ENCODE measurements at regions of chr6 and their contacts with region 1.

Region 1: GRCh38 chr6:137218917-137219663 is at the start of gene IFNGR1:
- DNase-seq: peak; percentile 97
- H3K4me3 Mint-ChIP-seq: peak within 1 kb of the TSS; percentile 93
- H3K27ac Mint-ChIP-seq: peak within 1 kb of the TSS; percentile 94
- H3K4me1 Mint-ChIP-seq: peaks cover 49% of the 10 kb centered on the region
- H3K27me3 Mint-ChIP-seq: no peaks in the 10 kb centered on the region
- total RNA-seq, gene IFNGR1: 25.5 to 26.4 TPM

Region 2: GRCh38 chr6:136289579-136290409 is 929.3 kb before region 1 on chr6 and contains the start of gene BCLAF1:
- CTCF ChIA-PET with region 1: no interaction called
- intact Hi-C with region 1: loop called (anchors 2 kb)
- DNase-seq: peak; percentile 99
- H3K4me3 Mint-ChIP-seq: peak within 1 kb of the TSS; percentile 97
- H3K27ac Mint-ChIP-seq: peak within 1 kb of the TSS; percentile 100
- H3K4me1 Mint-ChIP-seq: peaks cover 44% of the 10 kb centered on the region
- H3K27me3 Mint-ChIP-seq: no peaks in the 10 kb centered on the region
- total RNA-seq, gene BCLAF1: 108 to 117 TPM

Region 3: DNA sequence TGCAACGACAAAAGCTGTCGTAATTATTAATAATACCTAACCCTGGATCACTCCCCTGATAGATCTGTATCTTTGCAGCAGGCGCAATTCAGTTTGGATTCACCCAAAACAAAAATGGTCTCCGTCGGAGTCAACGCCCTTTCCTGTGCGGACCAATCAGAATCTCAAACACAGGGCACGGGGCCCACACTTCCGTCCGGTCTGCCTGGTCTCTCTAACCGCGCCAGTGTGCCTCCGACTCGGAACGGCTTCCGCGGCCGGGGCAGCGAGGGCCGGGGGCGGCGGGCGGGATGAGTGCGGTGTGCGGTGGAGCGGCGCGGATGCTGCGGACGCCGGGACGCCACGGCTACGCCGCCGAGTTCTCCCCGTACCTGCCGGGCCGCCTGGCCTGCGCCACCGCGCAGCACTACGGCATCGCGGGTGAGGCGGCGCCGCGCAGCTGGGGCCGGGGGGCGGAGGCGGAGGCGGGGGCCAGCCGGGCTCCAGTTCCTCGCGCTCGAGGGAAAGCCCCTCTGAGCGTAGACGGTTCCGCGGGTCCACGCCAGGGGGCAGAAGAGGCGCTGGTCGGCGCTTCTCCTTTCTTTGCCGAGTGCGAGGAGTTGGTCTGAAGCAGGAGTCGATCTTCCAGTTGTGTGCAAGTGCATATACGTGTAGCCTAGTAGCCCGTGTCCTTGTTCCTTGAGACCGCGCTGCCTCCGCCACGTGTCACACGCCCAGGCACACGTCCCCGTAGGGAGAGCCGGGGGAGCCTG is 396.5 kb before region 1 on chr6 and contains the start of gene PEX7:
- CTCF ChIA-PET with region 1: no interaction called
- intact Hi-C with region 1: loop called (anchors 2 kb)
- DNase-seq: peak; percentile 92
- H3K4me3 Mint-ChIP-seq: peak within 1 kb of the TSS; percentile 90
- H3K27ac Mint-ChIP-seq: peak within 1 kb of the TSS; percentile 92
- H3K4me1 Mint-ChIP-seq: peaks cover 19% of the 10 kb centered on the region
- H3K27me3 Mint-ChIP-seq: no peaks in the 10 kb centered on the region
- total RNA-seq, gene PEX7: 6.0 to 6.4 TPM

Region 4: GRCh38 chr6:137094411-137095008 is 124.6 kb before region 1 on chr6:
- CTCF ChIA-PET with region 1: no interaction called
- intact Hi-C with region 1: loop called (anchors 2 kb)
- DNase-seq: peak; percentile 75
- H3K4me3 Mint-ChIP-seq: no peak overlapping the region
- H3K27ac Mint-ChIP-seq: no peak overlapping the region
- H3K4me1 Mint-ChIP-seq: peaks cover 13% of the 10 kb centered on the region
- H3K27me3 Mint-ChIP-seq: peaks cover 3% of the 10 kb centered on the region

Region 5: GRCh38 chr6:137165375-137166246 is 53.5 kb before region 1 on chr6:
- CTCF ChIA-PET with region 1: interaction called, 4 read pairs
- intact Hi-C with region 1: loop called (anchors 1 kb)
- DNase-seq: peak; percentile 64
- H3K4me3 Mint-ChIP-seq: no peak overlapping the region
- H3K27ac Mint-ChIP-seq: no peak overlapping the region
- H3K4me1 Mint-ChIP-seq: peaks cover 27% of the 10 kb centered on the region
- H3K27me3 Mint-ChIP-seq: peaks cover 13% of the 10 kb centered on the region

Region 6: DNA sequence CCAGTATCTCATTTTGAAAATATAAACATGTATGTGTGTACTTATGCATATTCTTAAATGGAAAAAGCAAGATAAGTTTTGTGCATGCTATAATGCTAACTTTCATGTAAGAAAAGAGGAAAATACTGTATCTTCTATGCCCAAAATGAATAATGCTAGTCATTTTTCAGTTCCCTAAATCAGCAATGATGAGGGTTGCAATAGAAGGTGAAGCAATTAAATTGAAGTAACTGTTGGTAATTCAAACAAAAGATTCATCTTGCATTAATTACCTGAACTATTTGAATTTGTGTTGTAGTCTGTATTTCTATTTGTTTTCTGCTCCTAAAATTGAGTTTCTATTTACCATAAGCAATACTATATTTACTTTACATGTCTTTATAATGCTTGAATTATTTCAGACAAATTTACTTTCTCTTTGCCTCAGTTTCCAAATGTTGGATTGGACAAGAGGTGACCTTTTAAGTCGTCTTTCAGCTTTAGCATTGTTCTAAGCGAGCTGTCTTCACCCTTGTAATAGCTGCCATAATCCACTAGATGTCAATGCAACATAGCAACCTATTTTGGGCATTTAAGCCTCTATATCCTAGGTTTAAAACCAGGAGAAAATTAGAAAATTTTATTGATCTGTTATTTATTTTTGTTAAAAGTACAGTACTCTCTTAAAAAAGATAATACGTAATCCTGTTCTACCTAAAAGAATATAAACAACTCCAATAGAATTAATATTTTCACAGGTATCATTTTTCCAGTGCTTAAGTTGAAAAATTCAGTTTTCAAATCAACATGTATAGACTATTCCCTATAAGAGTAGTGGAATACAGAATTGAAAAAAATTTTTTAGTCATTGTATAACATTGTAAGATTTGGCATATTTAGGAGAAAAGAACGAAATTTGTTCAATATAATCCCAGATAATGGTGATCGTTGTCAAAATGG is 52.4 kb after region 1 on chr6:
- CTCF ChIA-PET with region 1: no interaction called
- intact Hi-C with region 1: no loop called
- DNase-seq: no peak
- H3K4me3 Mint-ChIP-seq: no peak overlapping the region
- H3K27ac Mint-ChIP-seq: no peak overlapping the region
- H3K4me1 Mint-ChIP-seq: no peaks in the 10 kb centered on the region
- H3K27me3 Mint-ChIP-seq: peaks cover 9% of the 10 kb centered on the region

Region 7: GRCh38 chr6:137680705-137681346 is 461.7 kb after region 1 on chr6:
- CTCF ChIA-PET with region 1: no interaction called
- intact Hi-C with region 1: loop called (anchors 5 kb)
- DNase-seq: no peak
- H3K4me3 Mint-ChIP-seq: no peak overlapping the region
- H3K27ac Mint-ChIP-seq: peak overlapping the region; percentile 84
- H3K4me1 Mint-ChIP-seq: peaks cover 54% of the 10 kb centered on the region
- H3K27me3 Mint-ChIP-seq: peaks cover 8% of the 10 kb centered on the region

Measured in activated naive CD4-positive, alpha-beta T cell treated with anti-CD3 and anti-CD28 coated beads for 36 hours (primary cell).